Dendritic cell treated with granulocyte-macrophage colony-stimulating factor and Interleukin-4, amounts not matched to agents 40 ng/mL and 50 ng/mL, for 4 days (primary cell): ENCODE measurements at regions of chr22 and their contacts with region 1.

Region 1: DNA sequence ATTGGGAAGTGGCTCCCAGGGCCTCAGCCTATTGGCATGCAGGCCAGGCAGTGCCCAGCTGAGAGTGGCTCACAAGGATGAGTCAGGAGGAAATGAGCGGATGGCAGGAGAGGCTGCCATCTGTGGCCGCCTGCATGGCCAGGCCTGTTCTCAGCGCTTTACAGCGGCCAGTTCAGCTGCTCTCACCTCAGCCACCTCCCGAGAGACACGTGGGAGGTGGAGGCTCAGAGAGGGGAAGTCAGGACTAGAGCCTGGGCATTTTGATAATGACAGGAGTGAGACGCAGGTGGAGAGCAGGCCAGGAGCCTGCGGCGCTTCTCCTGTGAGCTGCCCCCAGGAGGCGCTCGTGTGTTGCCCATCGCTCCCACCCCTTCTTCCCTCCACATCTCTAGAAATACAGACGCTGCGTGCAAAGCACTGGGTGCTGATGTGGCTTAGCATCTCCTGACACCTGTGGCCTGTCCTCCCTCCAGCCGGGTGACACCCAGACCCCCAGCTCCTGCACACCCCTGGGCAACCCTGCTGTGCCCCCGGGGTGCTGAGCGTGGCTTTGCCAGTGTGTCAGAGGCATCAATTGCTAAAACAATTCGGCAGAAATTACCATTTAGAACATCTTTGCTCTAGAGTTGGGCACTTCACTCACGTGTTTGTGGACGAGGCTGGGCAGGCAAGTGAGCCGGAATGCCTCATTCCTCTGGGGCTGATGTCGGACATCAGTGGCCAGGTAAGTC is 21.4 kb upstream of the PANX2 start:
- H3K4me3 Mint-ChIP-seq: no peak overlapping the region
- H3K27ac Mint-ChIP-seq: peak overlapping the region; percentile 50
- H3K4me1 Mint-ChIP-seq: peaks cover 43% of the 10 kb centered on the region
- H3K27me3 Mint-ChIP-seq: peaks cover 11% of the 10 kb centered on the region

Region 2: GRCh38 chr22:49847751-49848689 is 301.1 kb before region 1 on chr22:
- intact Hi-C with region 1: no loop called
- H3K4me3 Mint-ChIP-seq: peak overlapping the region; percentile 90
- H3K27ac Mint-ChIP-seq: peak overlapping the region; percentile 98
- H3K4me1 Mint-ChIP-seq: peaks cover 37% of the 10 kb centered on the region
- H3K27me3 Mint-ChIP-seq: peaks cover 18% of the 10 kb centered on the region

Region 3: GRCh38 chr22:50048061-50048765 is 100.9 kb before region 1 on chr22:
- intact Hi-C with region 1: no loop called
- H3K4me3 Mint-ChIP-seq: no peak overlapping the region
- H3K27ac Mint-ChIP-seq: no peak overlapping the region
- H3K4me1 Mint-ChIP-seq: no peaks in the 10 kb centered on the region
- H3K27me3 Mint-ChIP-seq: peaks cover 27% of the 10 kb centered on the region

Region 4: GRCh38 chr22:50185384-50186087 is 36.4 kb after region 1 on chr22 and contains the start of gene TRABD:
- intact Hi-C with region 1: loop called (anchors 5 kb)
- H3K4me3 Mint-ChIP-seq: peak within 1 kb of the TSS; percentile 84
- H3K27ac Mint-ChIP-seq: peak within 1 kb of the TSS; percentile 76
- H3K4me1 Mint-ChIP-seq: peaks cover 55% of the 10 kb centered on the region
- H3K27me3 Mint-ChIP-seq: no peaks in the 10 kb centered on the region

Region 5: GRCh38 chr22:50209893-50210292 is 60.7 kb after region 1 on chr22:
- intact Hi-C with region 1: loop called (anchors 1 kb)
- H3K4me3 Mint-ChIP-seq: no peak overlapping the region
- H3K27ac Mint-ChIP-seq: no peak overlapping the region
- H3K4me1 Mint-ChIP-seq: peaks cover 41% of the 10 kb centered on the region
- H3K27me3 Mint-ChIP-seq: no peaks in the 10 kb centered on the region

Region 6: DNA sequence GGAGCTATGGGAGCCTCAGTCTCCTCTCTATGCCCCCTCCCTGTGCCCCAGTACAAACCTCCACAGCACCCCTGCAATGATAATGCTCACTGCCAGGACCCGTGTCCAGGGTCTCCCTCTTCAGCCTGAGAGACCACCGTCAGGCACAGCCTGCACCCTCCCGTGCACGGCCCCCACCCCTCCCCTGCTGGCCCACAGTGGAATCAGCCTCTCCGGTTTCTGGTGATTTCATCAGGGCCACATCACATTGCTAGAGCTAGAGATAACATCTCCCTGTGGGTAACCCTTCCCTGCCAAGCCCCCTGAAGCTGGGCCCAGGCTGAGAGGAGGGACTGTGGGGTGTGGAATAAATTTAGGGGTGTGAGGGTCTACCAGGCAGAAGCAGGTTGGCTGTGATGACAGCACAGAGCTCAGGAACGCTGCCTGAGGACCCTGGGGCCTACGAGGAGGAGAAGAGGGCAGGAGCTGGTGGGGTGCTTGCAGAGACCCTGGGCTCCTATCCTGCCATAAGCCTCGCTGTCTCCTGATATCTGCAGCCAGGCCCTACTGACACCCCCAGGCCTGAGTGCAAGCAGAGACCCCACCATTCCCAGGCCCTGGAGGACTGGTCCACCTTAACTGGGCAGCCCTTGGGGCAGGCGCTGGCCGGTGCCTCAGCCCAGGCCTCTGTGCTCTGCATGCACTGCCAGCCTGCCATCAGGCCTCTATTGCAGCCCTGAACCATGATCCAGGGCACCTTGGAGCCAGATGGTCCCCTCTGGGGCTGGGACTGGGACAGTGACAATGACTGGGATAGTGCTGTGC is 396.6 kb after region 1 on chr22 and contains the start of gene KLHDC7B:
- intact Hi-C with region 1: no loop called
- H3K4me3 Mint-ChIP-seq: no peak within 1 kb of the TSS
- H3K27ac Mint-ChIP-seq: peak within 1 kb of the TSS; percentile 95
- H3K4me1 Mint-ChIP-seq: peaks cover 50% of the 10 kb centered on the region
- H3K27me3 Mint-ChIP-seq: peaks cover 27% of the 10 kb centered on the region